ENCODE measurements at regions of chr21 and their contacts with region 1.

Region 1: GRCh38 chr21:15729674-15730483 is at the start of gene USP25:
- DNase-seq: peak; percentile 98
- ATAC-seq: peak; percentile 99
- total RNA-seq, gene USP25: 48.4 TPM

Region 2: DNA sequence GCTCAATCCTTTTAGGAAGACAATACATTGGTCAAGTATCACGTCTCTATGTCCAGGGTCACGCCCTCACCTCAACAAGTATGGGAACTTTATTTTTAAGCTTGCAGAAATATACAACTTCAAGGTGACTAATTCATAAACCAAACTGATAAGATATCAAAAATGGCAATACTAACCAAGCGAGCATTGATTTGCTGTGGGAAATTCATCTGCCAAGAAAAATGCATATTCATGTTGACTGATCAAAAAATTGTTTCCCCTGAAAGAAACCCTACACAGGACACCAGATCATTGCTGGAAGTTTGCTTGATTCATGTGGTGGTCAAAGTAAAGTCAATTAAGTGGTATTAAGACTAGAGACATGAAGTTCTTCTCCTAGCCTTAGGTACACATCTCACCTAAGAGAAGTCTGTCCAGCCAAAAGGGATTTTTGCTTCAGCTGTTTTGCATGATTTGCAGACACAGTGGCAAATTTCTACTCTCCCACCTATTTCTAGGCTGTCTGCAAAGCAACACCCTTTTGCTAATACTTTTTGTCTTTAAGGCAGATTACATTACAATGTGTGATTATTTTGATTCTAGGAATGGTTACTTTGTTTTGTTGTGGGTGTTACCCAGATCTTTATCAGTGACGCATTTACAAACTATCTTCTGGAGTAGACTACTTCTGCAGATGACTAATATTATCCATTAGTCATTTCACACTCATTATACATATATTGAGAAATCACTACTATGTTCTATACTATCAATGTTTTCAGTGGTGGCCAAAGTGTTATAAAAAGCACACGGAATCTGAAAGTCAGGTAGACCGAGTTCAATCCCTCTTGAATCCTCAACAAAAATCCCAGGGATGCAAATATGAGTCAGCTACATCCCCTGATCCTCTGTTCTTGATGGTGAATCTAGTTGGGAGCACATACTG is 1196.1 kb before region 1 on chr21:
- intact Hi-C with region 1: no loop called
- DNase-seq: no peak
- ATAC-seq: no peak

Region 3: DNA sequence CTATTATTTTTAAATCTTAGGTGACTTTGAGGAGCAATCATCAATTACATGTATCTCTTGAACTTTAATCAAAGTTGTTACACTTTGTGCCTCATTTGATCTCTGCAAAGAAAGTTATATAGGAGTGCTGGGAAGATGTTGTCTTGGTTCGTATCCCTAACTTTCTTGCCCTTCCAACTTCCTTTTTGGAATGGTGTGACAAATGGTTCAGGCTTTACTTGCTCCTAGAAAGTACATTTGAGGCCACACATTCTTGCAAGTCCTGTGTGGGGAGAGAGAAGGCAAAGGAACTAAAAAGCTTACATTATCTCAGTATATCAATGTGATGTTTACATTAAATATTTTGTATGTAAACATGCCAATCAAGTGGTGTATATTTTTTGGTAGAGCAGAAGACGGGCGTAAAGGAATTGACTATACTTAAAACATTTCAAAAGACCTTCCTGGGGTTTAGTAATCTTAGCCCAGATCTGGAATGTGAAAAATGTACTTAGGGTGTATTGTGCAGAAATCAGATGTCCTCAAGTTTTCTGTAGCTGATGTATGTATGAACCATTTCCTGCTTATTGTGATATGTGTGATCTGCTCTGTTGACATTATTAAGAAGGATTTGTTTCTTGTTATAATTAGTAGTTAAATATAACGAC is 59.1 kb after region 1 on chr21:
- intact Hi-C with region 1: loop called (anchors 5 kb)
- DNase-seq: no peak
- ATAC-seq: no peak

Region 4: DNA sequence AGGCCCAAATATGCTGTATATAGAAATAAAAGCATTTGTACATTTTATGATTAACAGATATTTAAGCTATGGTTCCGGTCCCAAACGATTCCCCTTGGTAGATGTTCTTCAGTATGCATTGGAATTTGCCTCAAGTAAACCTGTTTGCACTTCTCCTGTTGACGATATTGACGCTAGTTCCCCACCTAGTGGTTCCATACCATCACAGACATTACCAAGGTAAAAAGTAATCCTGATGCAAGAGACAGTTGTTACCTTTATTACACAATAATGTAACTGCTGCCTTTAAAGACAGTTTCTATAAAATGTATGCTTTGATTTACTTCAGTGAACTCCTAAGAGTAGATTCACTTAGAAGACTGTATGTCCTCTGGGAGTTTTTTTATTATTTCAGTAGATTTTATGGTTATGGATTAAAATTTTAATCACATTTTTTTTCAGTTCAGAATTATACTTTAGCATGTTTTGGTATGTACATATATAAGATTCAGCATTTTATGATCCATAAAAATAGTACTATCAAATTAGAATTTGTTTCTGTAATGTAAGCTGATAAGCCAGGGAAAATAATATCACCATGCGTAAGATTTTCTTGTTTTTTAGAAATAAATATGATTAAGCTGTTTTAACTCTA is 96.4 kb after region 1 on chr21:
- intact Hi-C with region 1: loop called (anchors 1 kb)
- DNase-seq: no peak
- ATAC-seq: no peak

Region 5: GRCh38 chr21:15953551-15954116 is 223.8 kb after region 1 on chr21:
- intact Hi-C with region 1: no loop called
- DNase-seq: no peak
- ATAC-seq: no peak

Measured in Right ventricle myocardium inferior (tissue), 1 donor.